ENCODE measurements at regions of chr2 and their contacts with region 1.

Region 1: GRCh38 chr2:177164584-177165052 is 48.0 kb upstream of the HNRNPA3 start:
- DNase-seq: peak; percentile 65 to 77 (median 71)
- ATAC-seq: peak; percentile 89
- H3K4me3 ChIP-seq: peak overlapping the region; percentile 25
- H3K4me3 Mint-ChIP-seq: no peak overlapping the region
- H3K27ac ChIP-seq: peak overlapping the region; percentile 66
- H3K27ac Mint-ChIP-seq: no peak overlapping the region
- H3K4me1 ChIP-seq: peaks cover 11 to 16% of the 10 kb centered on the region in 2 donors
- H3K4me1 Mint-ChIP-seq: peaks cover 0 to 33% (median 12%) of the 10 kb centered on the region in 7 donors
- H3K27me3 ChIP-seq: no peaks in the 10 kb centered on the region
- H3K27me3 Mint-ChIP-seq: peaks cover 0 to 7% (median 0%) of the 10 kb centered on the region in 5 donors

Region 2: GRCh38 chr2:176753752-176754474 is 410.7 kb before region 1 on chr2:
- CTCF ChIA-PET with region 1: no interaction called
- POLR2A ChIA-PET with region 1: no interaction called
- intact Hi-C with region 1: no loop called
- DNase-seq: no peak
- ATAC-seq: no peak
- H3K4me3 ChIP-seq: no peak overlapping the region
- H3K4me3 Mint-ChIP-seq: no peak overlapping the region
- H3K27ac ChIP-seq: no peak overlapping the region
- H3K27ac Mint-ChIP-seq: no peak overlapping the region
- H3K4me1 ChIP-seq: no peaks in the 10 kb centered on the region
- H3K4me1 Mint-ChIP-seq: no peaks in the 10 kb centered on the region
- H3K27me3 ChIP-seq: no peaks in the 10 kb centered on the region
- H3K27me3 Mint-ChIP-seq: peaks cover 8 to 22% (median 16%) of the 10 kb centered on the region in 5 donors

Region 3: DNA sequence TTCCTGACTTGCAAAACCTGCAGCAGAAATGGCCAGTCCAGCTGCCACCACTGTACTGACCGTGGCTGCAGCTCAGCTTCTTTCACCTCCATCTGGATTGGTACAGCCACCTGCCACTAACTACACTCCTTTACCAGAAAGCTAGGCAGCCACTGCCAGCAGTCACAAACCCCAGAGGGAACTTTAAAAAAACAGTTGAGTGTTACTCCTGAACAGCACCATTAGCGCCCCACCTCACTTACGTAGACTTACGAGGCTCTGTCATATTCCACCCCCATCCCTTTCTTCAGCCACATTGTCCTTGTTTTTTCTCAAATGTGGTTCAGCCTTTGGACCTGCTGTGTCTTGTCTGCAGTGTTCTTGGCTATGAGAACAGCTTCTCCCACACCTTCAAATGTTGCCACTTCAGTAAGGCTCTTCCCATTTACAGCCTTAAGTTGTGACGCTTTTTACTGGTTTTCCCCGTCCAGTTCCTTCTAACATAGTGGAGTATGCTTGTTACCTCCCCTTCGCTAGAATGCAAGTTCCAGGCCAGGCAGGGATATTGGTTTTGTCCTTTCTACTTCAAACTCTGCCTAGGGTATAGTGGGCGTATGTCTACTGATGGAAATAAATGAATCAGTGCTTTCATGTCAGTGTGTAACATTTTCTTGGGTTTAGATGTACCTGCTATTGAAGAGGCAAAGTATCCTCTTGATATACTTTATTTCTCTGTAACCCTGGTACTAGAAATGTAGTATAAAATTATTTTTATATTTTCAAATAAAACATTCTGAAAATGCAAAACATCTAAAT is 65.0 kb after region 1 on chr2:
- CTCF ChIA-PET with region 1: interaction called, 4 read pairs
- POLR2A ChIA-PET with region 1: no interaction called
- intact Hi-C with region 1: loop called in 1 of 2 experiments (anchors 5 kb)
- DNase-seq: no peak
- ATAC-seq: no peak
- H3K4me3 ChIP-seq: no peak overlapping the region
- H3K4me3 Mint-ChIP-seq: no peak overlapping the region
- H3K27ac ChIP-seq: no peak overlapping the region
- H3K27ac Mint-ChIP-seq: peak overlapping the region; percentile 36 to 87 (median 74)
- H3K4me1 ChIP-seq: no peaks in the 10 kb centered on the region
- H3K4me1 Mint-ChIP-seq: peaks cover 21 to 57% (median 53%) of the 10 kb centered on the region in 7 donors
- H3K27me3 ChIP-seq: no peaks in the 10 kb centered on the region
- H3K27me3 Mint-ChIP-seq: no peaks in the 10 kb centered on the region

Region 4: GRCh38 chr2:177314194-177314593 is 149.6 kb after region 1 on chr2:
- CTCF ChIA-PET with region 1: interaction called, 21 read pairs
- POLR2A ChIA-PET with region 1: interaction called, 10 read pairs
- intact Hi-C with region 1: no loop called
- DNase-seq: no peak
- ATAC-seq: no peak
- H3K4me3 ChIP-seq: no peak overlapping the region
- H3K4me3 Mint-ChIP-seq: no peak overlapping the region
- H3K27ac ChIP-seq: no peak overlapping the region
- H3K27ac Mint-ChIP-seq: peak overlapping the region in 7 of 9 donors; percentile 36 to 97 (median 73)
- H3K4me1 ChIP-seq: peaks cover 6 to 13% of the 10 kb centered on the region in 2 donors
- H3K4me1 Mint-ChIP-seq: peaks cover 17 to 54% (median 31%) of the 10 kb centered on the region in 7 donors
- H3K27me3 ChIP-seq: no peaks in the 10 kb centered on the region
- H3K27me3 Mint-ChIP-seq: no peaks in the 10 kb centered on the region

Region 5: GRCh38 chr2:177419274-177419673 is 254.7 kb after region 1 on chr2:
- CTCF ChIA-PET with region 1: interaction called, 87 read pairs
- POLR2A ChIA-PET with region 1: interaction called, 10 read pairs
- intact Hi-C with region 1: loop called (anchors 1 kb)
- DNase-seq: no peak
- ATAC-seq: no peak
- H3K4me3 ChIP-seq: no peak overlapping the region
- H3K4me3 Mint-ChIP-seq: no peak overlapping the region
- H3K27ac ChIP-seq: no peak overlapping the region
- H3K27ac Mint-ChIP-seq: peak overlapping the region in 1 of 9 donors; percentile 22
- H3K4me1 ChIP-seq: no peaks in the 10 kb centered on the region
- H3K4me1 Mint-ChIP-seq: peaks cover 5 to 54% (median 27%) of the 10 kb centered on the region in 7 donors
- H3K27me3 ChIP-seq: no peaks in the 10 kb centered on the region
- H3K27me3 Mint-ChIP-seq: no peaks in the 10 kb centered on the region

Region 6: GRCh38 chr2:177618255-177619253 is 453.9 kb after region 1 on chr2:
- CTCF ChIA-PET with region 1: no interaction called
- POLR2A ChIA-PET with region 1: interaction called, 3 read pairs
- intact Hi-C with region 1: loop called (anchors 2 to 5 kb)
- DNase-seq: peak; percentile 86 to 93 (median 91)
- ATAC-seq: peak; percentile 95
- H3K4me3 ChIP-seq: peak overlapping the region; percentile 86
- H3K4me3 Mint-ChIP-seq: peak overlapping the region; percentile 80 to 99 (median 96)
- H3K27ac ChIP-seq: peak overlapping the region; percentile 96
- H3K27ac Mint-ChIP-seq: peak overlapping the region; percentile 98 to 100 (median 99)
- H3K4me1 ChIP-seq: no peaks in the 10 kb centered on the region
- H3K4me1 Mint-ChIP-seq: peaks cover 0 to 15% (median 9%) of the 10 kb centered on the region in 7 donors
- H3K27me3 ChIP-seq: no peaks in the 10 kb centered on the region
- H3K27me3 Mint-ChIP-seq: peaks cover 0 to 35% (median 9%) of the 10 kb centered on the region in 5 donors